ENCODE measurements at regions of chr1 and their contacts with region 1.

Region 1: GRCh38 chr1:181318022-181318857 is 165.1 kb upstream of the CACNA1E start:
- DNase-seq: no peak
- H3K4me3 Mint-ChIP-seq: peak overlapping the region; percentile 3
- H3K27ac Mint-ChIP-seq: no peak overlapping the region
- H3K4me1 Mint-ChIP-seq: peaks cover 8% of the 10 kb centered on the region
- H3K27me3 Mint-ChIP-seq: peaks cover 73% of the 10 kb centered on the region
- CTCF ChIP-seq: no peak

Region 2: DNA sequence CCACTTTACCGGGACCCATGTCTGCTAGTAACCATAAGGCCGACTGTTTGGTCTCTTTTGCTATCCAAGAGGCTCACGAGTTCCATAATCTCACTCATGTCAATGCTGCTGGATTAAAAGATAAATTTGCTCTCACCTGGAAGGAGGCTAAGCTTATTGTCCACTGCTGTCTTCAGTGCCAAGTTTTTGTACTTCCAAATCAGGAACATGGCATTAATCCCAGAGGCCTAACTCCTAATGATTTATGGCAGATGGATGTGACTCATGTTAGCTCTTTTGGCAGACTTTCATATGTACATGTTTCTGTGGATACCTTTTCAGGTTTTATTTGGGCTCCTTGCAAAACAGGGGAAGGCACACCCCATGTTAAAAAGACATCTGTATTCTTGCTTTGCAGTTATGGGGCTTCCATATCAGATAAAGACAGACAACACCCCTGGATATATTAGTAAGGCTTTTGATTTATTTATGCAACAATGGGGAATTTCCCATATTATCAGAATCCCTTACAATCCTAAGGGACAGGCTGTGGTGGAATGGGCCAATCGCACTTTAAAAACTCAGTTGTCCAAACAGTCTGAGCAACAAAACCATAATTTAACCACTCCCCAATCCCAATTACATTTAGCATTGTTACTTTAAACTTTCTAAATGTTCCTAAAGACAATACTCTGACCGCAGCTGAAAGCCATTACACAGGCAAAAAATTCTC is 67.1 kb before region 1 on chr1:
- CTCF ChIA-PET with region 1: no interaction called
- intact Hi-C with region 1: loop called (anchors 2 kb)
- DNase-seq: peak; percentile 37
- H3K4me3 Mint-ChIP-seq: no peak overlapping the region
- H3K27ac Mint-ChIP-seq: no peak overlapping the region
- H3K4me1 Mint-ChIP-seq: peaks cover 46% of the 10 kb centered on the region
- H3K27me3 Mint-ChIP-seq: peaks cover 26% of the 10 kb centered on the region
- CTCF ChIP-seq: no peak

Region 3: DNA sequence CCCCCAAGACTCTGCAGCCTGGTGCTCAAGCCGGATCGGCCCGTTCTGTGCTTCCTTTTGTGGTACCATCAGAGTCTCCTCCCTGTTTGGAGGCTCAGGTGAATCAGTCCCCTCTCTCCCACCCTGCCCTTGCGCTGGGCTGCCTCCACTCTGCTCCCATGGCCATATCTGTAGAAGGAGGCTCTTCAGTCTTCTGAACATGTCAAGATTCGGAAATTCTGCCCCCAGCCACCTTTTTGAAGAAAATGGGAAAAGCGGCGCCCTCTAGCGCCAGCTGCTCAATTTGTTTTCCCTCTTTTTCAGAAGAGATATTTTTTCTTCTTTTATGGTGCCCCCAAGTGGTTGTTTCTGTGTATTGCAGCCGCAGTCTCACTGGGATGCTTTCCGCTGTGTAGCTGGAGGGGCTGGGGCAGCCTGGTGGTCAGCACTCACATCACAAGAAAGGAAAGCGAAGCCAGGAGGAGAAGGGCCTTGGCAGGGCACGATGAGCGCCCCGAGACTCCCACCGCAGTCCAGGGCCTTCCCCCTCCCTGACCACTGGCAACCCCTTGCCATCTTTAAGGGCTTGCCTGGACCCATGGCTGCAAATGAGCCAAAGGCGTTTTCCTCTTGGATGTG is 106.7 kb after region 1 on chr1:
- CTCF ChIA-PET with region 1: interaction called, 4 read pairs
- intact Hi-C with region 1: loop called (anchors 10 kb)
- DNase-seq: peak; percentile 83
- H3K4me3 Mint-ChIP-seq: peak overlapping the region; percentile 31
- H3K27ac Mint-ChIP-seq: no peak overlapping the region
- H3K4me1 Mint-ChIP-seq: peaks cover 8% of the 10 kb centered on the region
- H3K27me3 Mint-ChIP-seq: no peaks in the 10 kb centered on the region
- CTCF ChIP-seq: peak; percentile 99